ENCODE measurements at regions of chr16 and their contacts with region 1.

Region 1: GRCh38 chr16:2486645-2487516 is 12.0 kb downstream of the TBC1D24 start:
- DNase-seq: peak; percentile 81
- H3K4me3 ChIP-seq: no peak overlapping the region
- H3K27ac ChIP-seq: no peak overlapping the region
- H3K4me1 ChIP-seq: peaks cover 19% of the 10 kb centered on the region
- H3K27me3 ChIP-seq: no peaks in the 10 kb centered on the region
- CTCF ChIP-seq: peak in 1 of 3 experiments; percentile 33
- POLR2A ChIP-seq: no peak

Region 2: DNA sequence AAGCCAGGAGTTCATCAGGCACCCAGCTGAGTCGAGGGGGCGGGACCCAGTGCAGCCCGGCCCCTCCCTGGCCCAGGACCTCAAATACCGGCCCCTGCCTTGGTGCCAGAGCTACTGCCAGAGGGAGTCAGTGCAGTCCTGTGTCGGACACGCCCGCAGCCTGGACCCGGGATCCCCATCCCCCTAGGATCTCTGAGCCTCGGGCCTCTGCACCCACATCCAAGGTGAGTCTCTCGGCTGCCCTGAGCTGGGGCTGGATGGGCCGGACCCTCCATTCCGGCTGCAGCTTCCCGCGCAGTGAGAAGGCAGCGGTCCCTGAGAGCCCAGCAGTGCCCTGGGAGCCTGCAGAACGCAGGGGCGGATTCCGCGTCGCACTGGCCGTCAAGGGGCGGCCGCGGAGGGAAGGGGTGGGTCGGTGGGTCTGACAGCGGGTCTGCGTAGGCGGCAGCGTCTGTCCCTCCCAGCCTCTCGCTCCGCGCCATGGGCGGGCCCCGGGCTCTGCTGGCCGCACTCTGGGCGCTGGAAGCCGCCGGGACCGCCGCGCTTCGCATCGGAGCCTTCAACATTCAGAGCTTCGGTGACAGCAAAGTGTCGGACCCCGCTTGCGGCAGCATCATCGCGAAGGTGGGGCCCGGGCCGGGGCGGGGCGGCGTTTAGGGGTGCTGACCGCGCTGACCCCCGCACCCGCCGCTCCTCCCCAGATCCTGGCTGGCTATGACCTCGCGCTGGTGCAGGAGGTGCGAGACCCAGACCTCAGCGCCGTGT is 250.4 kb before region 1 on chr16 and contains the start of gene DNASE1L2:
- intact Hi-C with region 1: no loop called
- DNase-seq: no peak
- H3K4me3 ChIP-seq: peak within 1 kb of the TSS; percentile 15 to 17
- H3K27ac ChIP-seq: no peak within 1 kb of the TSS
- H3K4me1 ChIP-seq: peaks cover 9% of the 10 kb centered on the region
- H3K27me3 ChIP-seq: no peaks in the 10 kb centered on the region
- CTCF ChIP-seq: no peak
- POLR2A ChIP-seq: no peak
- total RNA-seq, gene DNASE1L2: 2.5 to 3.5 TPM

Region 3: DNA sequence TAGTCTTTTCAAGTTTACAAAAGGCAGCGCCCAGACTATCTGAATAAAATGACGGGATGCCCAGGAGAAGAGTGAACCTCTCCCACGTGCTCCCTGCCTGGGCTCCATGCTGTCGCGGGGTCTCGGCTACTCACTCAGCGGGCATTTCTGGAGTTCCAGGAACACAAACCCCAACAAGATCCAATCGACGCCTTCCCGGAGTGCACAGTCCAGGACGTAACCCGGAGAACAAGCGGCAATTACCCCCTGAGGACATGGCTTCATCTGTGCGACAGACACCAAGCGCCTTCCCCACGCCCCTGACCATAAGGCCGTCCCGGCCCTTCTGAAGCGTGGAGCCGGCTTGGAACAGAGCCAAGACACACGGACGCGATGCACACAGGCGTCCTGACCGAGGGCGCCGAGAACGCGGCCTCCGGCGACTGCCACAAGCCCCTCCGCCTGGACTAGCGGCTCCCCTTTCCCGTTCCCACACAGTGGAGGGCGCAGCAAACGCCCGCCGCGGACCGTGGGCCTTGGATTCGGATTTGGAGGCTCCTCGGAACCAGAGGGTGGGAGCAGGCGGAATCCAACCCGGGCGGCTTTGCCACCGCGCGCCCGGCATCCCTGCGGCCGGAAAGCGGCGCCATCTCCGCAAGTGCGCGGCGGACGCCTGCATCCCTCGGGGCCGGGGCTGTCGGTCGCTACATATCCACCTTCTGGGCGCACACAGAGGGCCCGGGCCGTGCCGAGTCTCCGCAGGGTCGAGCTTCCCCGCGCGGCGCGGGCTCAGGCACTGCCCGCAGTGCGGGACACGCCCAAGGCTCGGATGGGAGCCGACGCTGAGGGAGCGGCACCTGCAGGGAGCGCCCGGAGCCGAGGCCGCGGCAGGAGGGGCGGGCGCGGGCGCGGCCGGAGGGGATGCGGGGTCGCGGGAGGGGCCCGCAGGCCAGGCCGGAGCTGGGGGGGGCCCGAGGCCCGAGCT is 147.1 kb before region 1 on chr16:
- intact Hi-C with region 1: loop called (anchors 10 kb)
- DNase-seq: peak; percentile 71
- H3K4me3 ChIP-seq: peak overlapping the region; percentile 70 to 79
- H3K27ac ChIP-seq: peak overlapping the region; percentile 45 to 66
- H3K4me1 ChIP-seq: no peaks in the 10 kb centered on the region
- H3K27me3 ChIP-seq: no peaks in the 10 kb centered on the region
- CTCF ChIP-seq: no peak
- POLR2A ChIP-seq: no peak

Measured in testis (tissue), 5 donors.